IMR-90 (cell line): ENCODE measurements at regions of chr12 and their contacts with region 1.

Region 1: DNA sequence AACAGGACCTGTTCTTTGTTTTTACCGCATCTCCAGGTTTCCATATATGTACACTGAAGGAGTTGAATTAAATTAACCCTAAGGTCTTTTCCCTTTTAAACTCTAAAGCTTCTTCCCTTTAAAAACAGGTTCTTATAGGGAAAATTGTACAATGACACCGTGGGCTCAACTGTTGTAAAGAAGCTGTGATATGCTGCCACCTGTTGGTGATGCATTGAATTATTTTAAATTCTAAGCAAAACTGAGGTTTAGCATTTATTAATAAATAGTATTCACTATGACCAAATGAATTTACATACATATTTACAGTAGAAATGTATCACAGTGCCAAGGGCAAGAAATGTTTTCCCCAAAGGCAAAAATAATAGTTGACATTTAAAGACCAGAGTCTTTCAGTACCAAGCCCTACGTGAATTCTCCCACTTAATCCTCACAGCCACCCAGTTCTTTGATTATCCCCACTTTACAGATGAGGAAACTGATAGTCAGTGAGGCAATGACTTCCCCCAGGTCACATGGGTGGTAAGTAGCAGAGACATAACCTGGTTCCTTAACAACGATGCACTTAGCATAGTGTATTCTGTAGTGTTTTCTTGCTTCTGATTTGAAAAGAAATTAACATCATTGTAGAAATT is 35.7 kb upstream of the TMEM263 start:
- DNase-seq: peak; percentile 63
- ATAC-seq: peak; percentile 50; the same call in 1 of the 2 replicates
- H3K4me3 ChIP-seq: no peak overlapping the region
- H3K27ac ChIP-seq: no peak overlapping the region
- H3K4me1 ChIP-seq: no peaks in the 10 kb centered on the region
- H3K27me3 ChIP-seq: peaks cover 10% of the 10 kb centered on the region
- CTCF ChIP-seq: peak; percentile 81
- POLR2A ChIP-seq: no peak
- RAD21 ChIP-seq: peak; percentile 87

Region 2: DNA sequence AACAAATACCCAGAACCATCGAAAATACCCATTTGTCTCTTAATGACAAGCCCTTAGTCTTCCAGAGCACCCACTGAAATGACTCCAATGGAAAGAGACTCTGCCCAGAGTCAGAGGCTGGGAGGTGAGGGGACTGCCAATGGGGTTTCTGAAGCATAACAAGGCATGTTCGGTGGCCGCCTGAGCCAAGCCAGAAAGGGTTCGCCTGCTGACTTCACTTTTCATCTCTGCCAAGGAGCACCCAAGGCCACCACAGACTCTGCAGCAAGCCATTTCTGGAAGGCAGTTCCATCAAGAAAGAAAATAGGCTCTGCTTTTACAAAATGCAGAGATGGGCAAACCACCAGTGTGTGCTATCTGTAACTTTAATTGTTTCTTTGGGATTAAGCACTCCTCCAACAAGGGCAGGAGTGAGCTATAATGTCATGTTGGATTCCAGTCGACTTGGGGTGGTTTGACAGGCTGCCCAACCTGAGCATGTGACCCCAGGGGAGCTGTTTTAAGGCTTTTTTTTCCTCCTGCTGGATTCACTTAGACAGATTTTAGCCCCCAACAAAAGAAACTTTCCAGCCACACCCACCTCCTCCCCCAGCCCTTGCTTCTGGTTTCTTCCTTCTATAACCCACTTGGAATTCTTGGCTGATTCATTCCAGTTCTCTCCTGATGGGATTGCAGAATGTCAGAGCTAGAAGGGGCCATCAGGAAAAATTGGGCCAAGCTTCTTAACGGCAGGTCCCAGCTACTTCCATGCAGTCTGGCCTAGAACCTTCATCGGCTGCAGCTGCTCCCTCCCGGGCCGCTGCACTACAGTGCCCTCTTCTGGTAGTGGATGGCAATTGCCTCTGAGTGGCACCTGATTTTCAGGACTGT is 696.3 kb before region 1 on chr12:
- CTCF ChIA-PET with region 1: no interaction called
- POLR2A ChIA-PET with region 1: no interaction called
- dilution Hi-C with region 1: no loop called
- in situ Hi-C with region 1: no loop called
- intact Hi-C with region 1: loop called (anchors 1 kb)
- DNase-seq: peak; percentile 54
- ATAC-seq: peak; percentile 96
- H3K4me3 ChIP-seq: no peak overlapping the region
- H3K27ac ChIP-seq: no peak overlapping the region
- H3K4me1 ChIP-seq: no peaks in the 10 kb centered on the region
- H3K27me3 ChIP-seq: peaks cover 11% of the 10 kb centered on the region
- CTCF ChIP-seq: peak; percentile 93
- POLR2A ChIP-seq: 0 out of 2 replicates have a peak, but pooled peaks have one; percentile 28
- RAD21 ChIP-seq: peak; percentile 95

Region 3: GRCh38 chr12:106357549-106358395 is 562.3 kb before region 1 on chr12 and contains the start of gene POLR3B:
- CTCF ChIA-PET with region 1: interaction called, 5 read pairs
- POLR2A ChIA-PET with region 1: no interaction called
- dilution Hi-C with region 1: no loop called
- in situ Hi-C with region 1: no loop called
- intact Hi-C with region 1: loop called (anchors 1 kb)
- DNase-seq: peak; percentile 96
- ATAC-seq: peak; percentile 90
- H3K4me3 ChIP-seq: peak within 1 kb of the TSS; percentile 71
- H3K27ac ChIP-seq: peak within 1 kb of the TSS; percentile 91
- H3K4me1 ChIP-seq: peaks cover 3% of the 10 kb centered on the region; the same call in 1 of the 2 replicates
- H3K27me3 ChIP-seq: no peaks in the 10 kb centered on the region
- CTCF ChIP-seq: peak; percentile 94
- POLR2A ChIP-seq: peak; percentile 59
- RAD21 ChIP-seq: peak; percentile 73
- total RNA-seq, gene POLR3B: 15.4 and 20.0 TPM in 2 replicates

Region 4: GRCh38 chr12:106594447-106594846 is 325.6 kb before region 1 on chr12:
- CTCF ChIA-PET with region 1: no interaction called
- POLR2A ChIA-PET with region 1: no interaction called
- dilution Hi-C with region 1: no loop called
- in situ Hi-C with region 1: no loop called
- intact Hi-C with region 1: loop called (anchors 10 kb)
- DNase-seq: no peak
- ATAC-seq: no peak
- H3K4me3 ChIP-seq: no peak overlapping the region
- H3K27ac ChIP-seq: no peak overlapping the region
- H3K4me1 ChIP-seq: no peaks in the 10 kb centered on the region
- H3K27me3 ChIP-seq: peaks cover 26% of the 10 kb centered on the region
- CTCF ChIP-seq: no peak
- POLR2A ChIP-seq: no peak
- RAD21 ChIP-seq: no peak

Region 5: GRCh38 chr12:106657488-106657887 is 262.5 kb before region 1 on chr12:
- CTCF ChIA-PET with region 1: no interaction called
- POLR2A ChIA-PET with region 1: no interaction called
- dilution Hi-C with region 1: no loop called
- in situ Hi-C with region 1: no loop called
- intact Hi-C with region 1: no loop called
- DNase-seq: no peak
- ATAC-seq: no peak
- H3K4me3 ChIP-seq: no peak overlapping the region
- H3K27ac ChIP-seq: no peak overlapping the region
- H3K4me1 ChIP-seq: no peaks in the 10 kb centered on the region
- H3K27me3 ChIP-seq: no peaks in the 10 kb centered on the region; the same call in 1 of the 2 replicates
- CTCF ChIP-seq: no peak
- POLR2A ChIP-seq: no peak
- RAD21 ChIP-seq: no peak

Region 6: GRCh38 chr12:106774005-106774807 is 145.8 kb before region 1 on chr12 and contains the start of gene RIC8B:
- CTCF ChIA-PET with region 1: no interaction called
- POLR2A ChIA-PET with region 1: no interaction called
- dilution Hi-C with region 1: no loop called
- in situ Hi-C with region 1: no loop called
- intact Hi-C with region 1: loop called (anchors 10 kb)
- DNase-seq: peak; percentile 99
- ATAC-seq: peak; percentile 97
- H3K4me3 ChIP-seq: peak within 1 kb of the TSS; percentile 76
- H3K27ac ChIP-seq: peak within 1 kb of the TSS; percentile 98
- H3K4me1 ChIP-seq: no peaks in the 10 kb centered on the region; the same call in 1 of the 2 replicates
- H3K27me3 ChIP-seq: no peaks in the 10 kb centered on the region
- CTCF ChIP-seq: no peak
- POLR2A ChIP-seq: peak; percentile 94
- RAD21 ChIP-seq: no peak
- total RNA-seq, gene RIC8B: 16.7 and 19.5 TPM in 2 replicates

Region 7: GRCh38 chr12:107564946-107565345 is 644.9 kb after region 1 on chr12:
- CTCF ChIA-PET with region 1: no interaction called
- POLR2A ChIA-PET with region 1: no interaction called
- dilution Hi-C with region 1: no loop called
- in situ Hi-C with region 1: no loop called
- intact Hi-C with region 1: no loop called
- DNase-seq: peak; percentile 16
- ATAC-seq: peak; percentile 46; the same call in 1 of the 2 replicates
- H3K4me3 ChIP-seq: no peak overlapping the region
- H3K27ac ChIP-seq: no peak overlapping the region
- H3K4me1 ChIP-seq: no peaks in the 10 kb centered on the region; the same call in 1 of the 2 replicates
- H3K27me3 ChIP-seq: no peaks in the 10 kb centered on the region
- CTCF ChIP-seq: no peak; the same call in 1 of the 2 replicates
- POLR2A ChIP-seq: no peak
- RAD21 ChIP-seq: peak; percentile 40